ENCODE measurements at regions of chr20 and their contacts with region 1.

Region 1: GRCh38 chr20:56289652-56290051 is 41.1 kb downstream of the MC3R start:
- DNase-seq: no peak
- ATAC-seq: no peak
- H3K4me3 ChIP-seq: no peak overlapping the region
- H3K4me3 Mint-ChIP-seq: no peak overlapping the region
- H3K27ac ChIP-seq: no peak overlapping the region
- H3K27ac Mint-ChIP-seq: no peak overlapping the region
- H3K4me1 ChIP-seq: no peaks in the 10 kb centered on the region
- H3K4me1 Mint-ChIP-seq: no peaks in the 10 kb centered on the region
- H3K27me3 ChIP-seq: no peaks in the 10 kb centered on the region
- H3K27me3 Mint-ChIP-seq: peaks cover 18% of the 10 kb centered on the region
- CTCF ChIP-seq: no peak

Region 2: GRCh38 chr20:56245761-56246160 is 43.9 kb before region 1 on chr20:
- CTCF ChIA-PET with region 1: no interaction called
- POLR2A ChIA-PET with region 1: no interaction called
- intact Hi-C with region 1: no loop called
- DNase-seq: no peak
- ATAC-seq: no peak
- H3K4me3 ChIP-seq: no peak overlapping the region
- H3K4me3 Mint-ChIP-seq: no peak overlapping the region
- H3K27ac ChIP-seq: no peak overlapping the region
- H3K27ac Mint-ChIP-seq: no peak overlapping the region
- H3K4me1 ChIP-seq: no peaks in the 10 kb centered on the region
- H3K4me1 Mint-ChIP-seq: no peaks in the 10 kb centered on the region
- H3K27me3 ChIP-seq: no peaks in the 10 kb centered on the region
- H3K27me3 Mint-ChIP-seq: peaks cover 35% of the 10 kb centered on the region
- CTCF ChIP-seq: no peak

Region 3: GRCh38 chr20:56257604-56258003 is 32.0 kb before region 1 on chr20:
- CTCF ChIA-PET with region 1: no interaction called
- POLR2A ChIA-PET with region 1: no interaction called
- intact Hi-C with region 1: no loop called
- DNase-seq: no peak
- ATAC-seq: no peak
- H3K4me3 ChIP-seq: no peak overlapping the region
- H3K4me3 Mint-ChIP-seq: no peak overlapping the region
- H3K27ac ChIP-seq: no peak overlapping the region
- H3K27ac Mint-ChIP-seq: no peak overlapping the region
- H3K4me1 ChIP-seq: no peaks in the 10 kb centered on the region
- H3K4me1 Mint-ChIP-seq: no peaks in the 10 kb centered on the region
- H3K27me3 ChIP-seq: no peaks in the 10 kb centered on the region
- H3K27me3 Mint-ChIP-seq: peaks cover 10% of the 10 kb centered on the region
- CTCF ChIP-seq: no peak

Region 4: GRCh38 chr20:56653221-56653620 is 363.6 kb after region 1 on chr20:
- CTCF ChIA-PET with region 1: no interaction called
- POLR2A ChIA-PET with region 1: interaction called, 11 read pairs
- intact Hi-C with region 1: no loop called
- DNase-seq: no peak
- ATAC-seq: no peak
- H3K4me3 ChIP-seq: no peak overlapping the region
- H3K4me3 Mint-ChIP-seq: no peak overlapping the region
- H3K27ac ChIP-seq: no peak overlapping the region
- H3K27ac Mint-ChIP-seq: no peak overlapping the region
- H3K4me1 ChIP-seq: no peaks in the 10 kb centered on the region
- H3K4me1 Mint-ChIP-seq: no peaks in the 10 kb centered on the region
- H3K27me3 ChIP-seq: no peaks in the 10 kb centered on the region
- H3K27me3 Mint-ChIP-seq: peaks cover 2% of the 10 kb centered on the region
- CTCF ChIP-seq: no peak